ENCODE measurements at regions of chr1 and their contacts with region 1.

Region 1: GRCh38 chr1:6646499-6647148 is 22.0 kb downstream of the THAP3 start:
- DNase-seq: peak; percentile 28 to 31
- ATAC-seq: peak; percentile 63 to 75; a peak in 4 of 6 replicates
- H3K4me3 ChIP-seq: no peak overlapping the region
- H3K27ac ChIP-seq: no peak overlapping the region
- H3K4me1 ChIP-seq: no peaks in the 10 kb centered on the region
- CTCF ChIP-seq: peak; percentile 49
- EP300 ChIP-seq: no peak
- POLR2A ChIP-seq: no peak
- RAD21 ChIP-seq: peak; percentile 41 to 60; a peak in 4 of 5 replicates

Region 2: DNA sequence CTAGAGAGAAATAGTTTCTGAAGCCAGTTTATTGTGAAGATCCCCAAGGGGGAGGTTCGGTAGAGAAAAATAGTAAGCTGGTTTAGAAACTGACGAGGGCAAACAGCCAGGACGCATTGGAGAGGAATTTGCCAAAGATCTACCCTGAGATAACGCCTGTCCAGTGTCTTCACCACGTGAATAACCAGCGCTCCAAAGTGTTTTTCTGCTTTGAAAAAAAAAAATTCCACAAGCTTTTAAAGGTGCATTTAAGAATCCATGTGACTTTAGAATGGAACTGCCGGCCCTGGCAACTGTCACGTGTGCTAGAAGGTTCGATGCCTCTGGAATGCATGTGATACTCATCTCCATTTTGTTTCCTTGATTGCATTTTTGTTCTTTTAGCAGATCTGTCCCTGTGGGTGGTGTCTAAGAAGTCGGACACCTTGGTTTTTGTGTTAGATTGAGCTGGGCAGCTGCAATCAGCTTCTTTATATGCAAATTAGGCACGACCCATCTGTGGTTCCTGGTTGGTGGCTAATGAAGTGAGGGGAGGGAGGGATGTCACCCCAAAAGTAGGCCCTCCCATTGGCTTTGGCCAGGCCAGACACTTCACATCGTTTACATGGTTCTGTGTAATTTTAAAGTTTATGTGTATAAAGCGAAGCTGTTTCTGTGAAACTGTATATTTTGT is 23.2 kb before region 1 on chr1:
- CTCF ChIA-PET with region 1: no interaction called
- POLR2A ChIA-PET with region 1: no interaction called
- DNase-seq: no peak
- ATAC-seq: no peak
- H3K4me3 ChIP-seq: no peak overlapping the region
- H3K27ac ChIP-seq: no peak overlapping the region
- H3K4me1 ChIP-seq: peaks cover 12% of the 10 kb centered on the region; the same call in 2 of the 3 replicates
- CTCF ChIP-seq: no peak
- EP300 ChIP-seq: no peak
- POLR2A ChIP-seq: no peak
- RAD21 ChIP-seq: no peak

Region 3: GRCh38 chr1:6634371-6635052 is 12.1 kb before region 1 on chr1:
- CTCF ChIA-PET with region 1: interaction called, 21 read pairs
- POLR2A ChIA-PET with region 1: no interaction called
- DNase-seq: peak; percentile 38 to 61
- ATAC-seq: peak; percentile 77 to 86
- H3K4me3 ChIP-seq: no peak overlapping the region
- H3K27ac ChIP-seq: no peak overlapping the region
- H3K4me1 ChIP-seq: no peaks in the 10 kb centered on the region
- CTCF ChIP-seq: peak; percentile 35; the same call in 2 of the 3 replicates
- EP300 ChIP-seq: no peak
- POLR2A ChIP-seq: no peak
- RAD21 ChIP-seq: peak; percentile 39 to 42; a peak in 3 of 5 replicates

Region 4: GRCh38 chr1:6657138-6657537 is 10.5 kb after region 1 on chr1:
- CTCF ChIA-PET with region 1: interaction called, 14 read pairs
- POLR2A ChIA-PET with region 1: no interaction called
- DNase-seq: no peak
- ATAC-seq: no peak
- H3K4me3 ChIP-seq: no peak overlapping the region
- H3K27ac ChIP-seq: no peak overlapping the region
- H3K4me1 ChIP-seq: no peaks in the 10 kb centered on the region
- CTCF ChIP-seq: no peak
- EP300 ChIP-seq: no peak
- POLR2A ChIP-seq: no peak
- RAD21 ChIP-seq: no peak

Region 5: GRCh38 chr1:6922096-6922931 is 275.7 kb after region 1 on chr1:
- CTCF ChIA-PET with region 1: no interaction called
- POLR2A ChIA-PET with region 1: no interaction called
- DNase-seq: no peak
- ATAC-seq: no peak
- H3K4me3 ChIP-seq: no peak overlapping the region
- H3K27ac ChIP-seq: no peak overlapping the region
- H3K4me1 ChIP-seq: no peaks in the 10 kb centered on the region
- CTCF ChIP-seq: no peak
- EP300 ChIP-seq: no peak
- POLR2A ChIP-seq: no peak
- RAD21 ChIP-seq: no peak

Measured in A549 (cell line).